AG04450 (cell line): ENCODE measurements at regions of chr6 and their contacts with region 1.

Region 1: GRCh38 chr6:157873735-157874344 is 50.8 kb downstream of the SNX9 start:
- DNase-seq: no peak
- H3K4me3 ChIP-seq: no peak overlapping the region
- H3K27ac ChIP-seq: no peak overlapping the region
- H3K27me3 ChIP-seq: no peaks in the 10 kb centered on the region
- CTCF ChIP-seq: peak; percentile 89

Region 2: DNA sequence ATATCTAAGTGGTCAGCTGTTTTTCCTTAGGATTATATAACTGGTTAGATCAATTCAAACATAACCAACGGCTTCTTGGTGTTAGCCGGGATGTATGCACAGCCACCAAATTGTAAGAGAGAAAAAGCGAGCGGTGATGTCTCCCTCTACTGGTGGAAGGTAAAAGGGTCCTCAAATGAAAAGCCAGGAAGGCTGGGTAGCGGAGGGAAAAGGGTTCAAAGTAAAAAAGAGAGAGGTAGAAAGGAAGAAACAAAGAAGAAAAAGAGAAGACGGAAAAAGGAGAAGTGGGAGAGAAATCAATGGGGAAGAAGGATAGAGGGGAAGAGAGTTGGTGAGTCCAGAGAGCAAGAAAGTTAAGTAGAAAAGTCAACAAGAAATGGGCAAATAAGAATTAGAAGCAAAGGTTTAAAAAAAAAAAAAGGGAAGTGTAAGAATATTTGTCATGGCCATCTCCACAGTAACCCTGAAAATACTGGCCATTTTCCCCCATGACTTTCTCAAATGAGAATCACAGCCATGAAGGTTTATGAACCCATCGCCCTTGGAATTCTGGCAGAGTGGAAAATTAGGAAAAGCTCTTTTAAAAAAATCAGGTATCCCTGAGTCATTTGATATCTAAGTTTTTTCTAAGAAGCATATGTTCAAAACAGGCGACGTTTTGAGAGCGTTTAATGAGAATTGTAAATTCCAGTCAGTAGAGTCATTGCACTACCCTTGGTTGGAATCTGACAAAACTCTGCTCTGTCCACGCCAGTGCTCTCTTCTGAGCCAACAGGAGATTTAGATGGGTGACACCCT is 206.4 kb before region 1 on chr6:
- CTCF ChIA-PET with region 1: interaction called, 16 read pairs
- POLR2A ChIA-PET with region 1: no interaction called
- DNase-seq: no peak
- H3K4me3 ChIP-seq: no peak overlapping the region
- H3K27ac ChIP-seq: no peak overlapping the region
- H3K27me3 ChIP-seq: no peaks in the 10 kb centered on the region
- CTCF ChIP-seq: peak; percentile 91

Region 3: DNA sequence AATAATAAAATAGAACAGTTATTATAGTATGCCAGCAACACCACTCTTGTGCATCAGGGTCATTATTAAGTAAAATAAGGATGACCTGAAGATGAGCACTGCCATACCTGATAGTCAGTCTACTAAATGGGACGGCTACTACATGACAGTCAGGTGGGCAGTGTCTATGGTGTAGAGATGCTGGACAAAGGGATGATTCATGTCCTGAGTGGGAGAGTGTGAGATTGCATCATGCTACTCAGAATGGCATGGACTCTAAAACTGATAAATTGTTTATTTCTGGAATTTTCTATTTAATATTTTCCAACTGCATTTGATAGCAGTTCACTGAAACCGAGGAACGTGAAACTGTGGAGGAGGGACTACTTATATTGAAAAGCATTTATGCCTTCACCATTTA is 12.0 kb before region 1 on chr6:
- CTCF ChIA-PET with region 1: interaction called, 21 read pairs
- POLR2A ChIA-PET with region 1: no interaction called
- DNase-seq: no peak
- H3K4me3 ChIP-seq: no peak overlapping the region
- H3K27ac ChIP-seq: no peak overlapping the region
- H3K27me3 ChIP-seq: no peaks in the 10 kb centered on the region
- CTCF ChIP-seq: no peak

Region 4: DNA sequence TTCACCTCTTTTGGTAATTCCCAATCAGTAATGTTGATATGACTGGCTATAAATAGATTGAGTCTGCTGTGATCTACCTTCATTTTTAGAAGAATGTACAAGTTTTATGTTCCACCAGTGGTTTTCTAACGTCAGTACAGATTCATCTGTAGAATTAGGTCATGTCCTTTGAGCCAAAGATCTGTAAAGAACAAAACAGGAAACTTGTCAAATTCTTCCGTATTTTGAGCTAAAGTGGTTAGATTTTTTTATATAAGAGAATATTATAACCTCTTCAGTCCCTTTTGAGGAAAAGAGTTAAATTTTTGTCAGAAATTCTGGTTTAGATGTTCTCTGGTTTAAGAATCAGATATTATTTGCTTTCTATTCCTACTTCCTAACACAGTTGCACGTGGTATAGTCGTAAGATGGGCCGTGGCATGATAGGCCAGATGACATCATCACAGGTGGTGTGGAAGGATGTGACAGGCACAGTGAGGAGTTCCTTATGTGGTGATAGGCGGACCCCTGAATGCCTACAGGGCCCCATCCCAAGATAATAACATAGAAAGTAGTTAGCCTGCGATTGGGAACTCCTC is 11.5 kb after region 1 on chr6:
- CTCF ChIA-PET with region 1: interaction called, 26 read pairs
- POLR2A ChIA-PET with region 1: no interaction called
- DNase-seq: no peak
- H3K4me3 ChIP-seq: no peak overlapping the region
- H3K27ac ChIP-seq: no peak overlapping the region
- H3K27me3 ChIP-seq: no peaks in the 10 kb centered on the region
- CTCF ChIP-seq: no peak

Region 5: GRCh38 chr6:157912326-157912725 is 38.5 kb after region 1 on chr6:
- CTCF ChIA-PET with region 1: interaction called, 15 read pairs
- POLR2A ChIA-PET with region 1: no interaction called
- DNase-seq: peak; percentile 74
- H3K4me3 ChIP-seq: no peak overlapping the region
- H3K27ac ChIP-seq: no peak overlapping the region
- H3K27me3 ChIP-seq: no peaks in the 10 kb centered on the region
- CTCF ChIP-seq: no peak

Region 6: DNA sequence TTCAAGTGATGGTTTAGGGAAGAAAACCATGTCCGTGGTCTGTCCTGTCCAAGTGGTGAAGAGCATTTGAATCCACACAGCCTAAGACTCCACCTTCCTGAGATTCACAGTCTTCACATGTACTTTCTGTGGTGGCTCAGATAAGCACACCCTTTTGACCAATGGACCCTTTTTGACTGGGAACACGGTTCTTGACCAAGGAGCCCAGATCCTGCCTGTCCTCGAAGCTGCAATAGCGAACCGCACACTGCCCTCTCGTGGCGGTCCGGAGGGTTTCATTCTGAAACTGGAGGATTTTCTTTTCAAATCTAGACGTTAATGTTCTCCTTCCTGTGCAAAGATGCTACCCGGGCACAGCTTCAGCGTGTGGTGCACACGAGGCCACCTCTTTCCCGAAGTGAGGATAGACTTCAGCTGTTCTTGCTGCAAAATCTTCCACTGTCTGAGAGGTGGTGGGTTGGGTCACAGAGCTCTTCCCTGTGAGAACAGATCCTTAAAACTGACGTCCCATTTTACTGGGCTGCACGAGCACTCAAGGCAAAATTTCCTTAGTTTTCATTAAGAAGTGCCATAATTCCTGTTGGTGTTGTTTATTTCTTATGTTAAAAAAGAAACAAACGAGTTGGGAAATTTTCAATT is 198.4 kb after region 1 on chr6:
- CTCF ChIA-PET with region 1: interaction called, 14 read pairs
- POLR2A ChIA-PET with region 1: no interaction called
- DNase-seq: peak; percentile 58
- H3K4me3 ChIP-seq: no peak overlapping the region
- H3K27ac ChIP-seq: no peak overlapping the region
- H3K27me3 ChIP-seq: no peaks in the 10 kb centered on the region
- CTCF ChIP-seq: peak; percentile 86